Breast epithelium (tissue), 4 donors: ENCODE measurements at regions of chr2 and their contacts with region 1.

Region 1: GRCh38 chr2:241309684-241310117 is 5.8 kb downstream of the HDLBP start:
- DNase-seq: no peak
- H3K4me3 ChIP-seq: no peak overlapping the region
- H3K27ac ChIP-seq: no peak overlapping the region
- H3K4me1 ChIP-seq: peaks cover 0 to 6% of the 10 kb centered on the region in 2 donors
- H3K27me3 ChIP-seq: no peaks in the 10 kb centered on the region
- CTCF ChIP-seq: no peak
- POLR2A ChIP-seq: no peak

Region 2: DNA sequence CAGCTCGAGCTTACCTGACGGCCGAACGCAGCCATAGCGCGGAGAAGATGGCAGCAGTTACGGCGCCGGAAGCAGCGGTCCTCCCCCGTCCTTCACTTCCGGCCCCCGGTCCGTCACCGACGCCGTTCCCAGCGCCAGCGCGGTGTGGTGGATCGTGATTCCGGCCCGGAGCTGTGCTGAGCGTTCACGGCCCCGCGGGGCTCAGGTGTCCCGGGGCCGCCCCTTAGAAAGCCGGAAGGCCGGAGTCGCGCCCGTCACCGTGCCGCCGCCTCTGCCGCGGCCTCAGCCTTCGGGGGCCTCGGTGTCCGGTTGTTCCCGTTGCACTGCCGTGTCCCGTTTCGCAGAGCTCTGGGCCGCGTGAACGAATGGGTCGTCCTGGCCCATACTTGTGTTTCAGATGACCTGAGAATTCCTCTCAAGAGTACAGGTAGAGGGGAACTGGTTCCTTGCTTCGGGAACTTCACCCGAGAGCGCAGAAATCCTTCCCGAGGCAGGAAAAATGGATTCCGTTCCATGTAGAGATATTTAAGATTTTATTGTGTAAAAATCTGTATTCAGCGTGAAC is 207.4 kb before region 1 on chr2 and contains the start of gene MTERF4:
- intact Hi-C with region 1: loop called (anchors 5 kb)
- DNase-seq: peak; percentile 78 to 90
- H3K4me3 ChIP-seq: peak within 1 kb of the TSS; percentile 87 to 90 (median 87)
- H3K27ac ChIP-seq: peak within 1 kb of the TSS; percentile 87 to 89
- H3K4me1 ChIP-seq: no peaks in the 10 kb centered on the region
- H3K27me3 ChIP-seq: no peaks in the 10 kb centered on the region
- CTCF ChIP-seq: no peak
- POLR2A ChIP-seq: no peak
- total RNA-seq, gene MTERF4: 35.7 to 54.6 (median 50.2) TPM